A549 (cell line): ENCODE measurements at regions of chr14 and their contacts with region 1.

Region 1: GRCh38 chr14:100015251-100015655 is 50.0 kb upstream of the EVL start:
- DNase-seq: no peak
- ATAC-seq: no peak
- H3K4me3 ChIP-seq: no peak overlapping the region
- H3K27ac ChIP-seq: no peak overlapping the region
- H3K4me1 ChIP-seq: peaks cover 31% of the 10 kb centered on the region
- CTCF ChIP-seq: no peak
- EP300 ChIP-seq: no peak
- POLR2A ChIP-seq: no peak
- RAD21 ChIP-seq: no peak

Region 2: GRCh38 chr14:100031536-100032281 is 16.5 kb after region 1 on chr14:
- CTCF ChIA-PET with region 1: interaction called, 16 read pairs
- POLR2A ChIA-PET with region 1: interaction called, 7 read pairs
- DNase-seq: peak; percentile 91 to 96
- ATAC-seq: peak; percentile 91 to 93
- H3K4me3 ChIP-seq: peak overlapping the region; percentile 41
- H3K27ac ChIP-seq: peak overlapping the region; percentile 95 to 96
- H3K4me1 ChIP-seq: peaks cover 61% of the 10 kb centered on the region
- CTCF ChIP-seq: peak; percentile 57
- EP300 ChIP-seq: peak; percentile 35 to 78; a peak in 3 of 5 replicates
- POLR2A ChIP-seq: no peak
- RAD21 ChIP-seq: peak in 1 of 2 experiments; percentile 18; a peak in 3 of 5 replicates